Activated CD4-positive, alpha-beta memory T cell treated with anti-CD3 and anti-CD28 coated beads, Interleukin-2, amount 10 ng/mL, durations not matched to agents 7 days and 5 days (primary cell): ENCODE measurements at regions of chr20 and their contacts with region 1.

Region 1: DNA sequence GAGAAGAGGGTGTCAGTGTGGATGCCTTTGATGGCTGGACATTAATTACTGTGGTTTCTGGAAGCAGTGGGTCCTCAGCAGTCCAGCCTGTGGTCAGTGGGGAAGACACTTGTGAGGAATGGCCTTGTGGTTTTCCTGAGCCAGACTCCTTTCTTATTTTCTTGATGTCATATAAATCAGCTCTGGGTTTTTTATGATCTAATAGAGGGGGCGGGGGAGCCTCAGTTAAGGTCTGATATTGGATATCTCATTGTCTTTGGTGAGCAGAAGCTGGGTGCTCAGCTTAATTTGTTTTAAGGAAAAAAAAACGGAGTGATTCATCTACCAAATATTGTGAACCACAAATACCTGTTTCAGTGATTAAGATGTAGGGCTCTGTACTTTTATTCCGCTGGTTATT is 62.1 kb downstream of the OTOR start:
- DNase-seq: no peak
- H3K4me3 Mint-ChIP-seq: no peak overlapping the region
- H3K27ac Mint-ChIP-seq: no peak overlapping the region
- H3K4me1 Mint-ChIP-seq: no peaks in the 10 kb centered on the region
- H3K27me3 Mint-ChIP-seq: peaks cover 12% of the 10 kb centered on the region

Region 2: GRCh38 chr20:16821211-16822089 is 11.2 kb after region 1 on chr20:
- CTCF ChIA-PET with region 1: interaction called, 45 read pairs
- POLR2A ChIA-PET with region 1: no interaction called
- DNase-seq: peak; percentile 38
- H3K4me3 Mint-ChIP-seq: no peak overlapping the region
- H3K27ac Mint-ChIP-seq: no peak overlapping the region
- H3K4me1 Mint-ChIP-seq: no peaks in the 10 kb centered on the region
- H3K27me3 Mint-ChIP-seq: peaks cover 14% of the 10 kb centered on the region